HEK293 (cell line): ENCODE measurements at regions of chr20 and their contacts with region 1.

Region 1: DNA sequence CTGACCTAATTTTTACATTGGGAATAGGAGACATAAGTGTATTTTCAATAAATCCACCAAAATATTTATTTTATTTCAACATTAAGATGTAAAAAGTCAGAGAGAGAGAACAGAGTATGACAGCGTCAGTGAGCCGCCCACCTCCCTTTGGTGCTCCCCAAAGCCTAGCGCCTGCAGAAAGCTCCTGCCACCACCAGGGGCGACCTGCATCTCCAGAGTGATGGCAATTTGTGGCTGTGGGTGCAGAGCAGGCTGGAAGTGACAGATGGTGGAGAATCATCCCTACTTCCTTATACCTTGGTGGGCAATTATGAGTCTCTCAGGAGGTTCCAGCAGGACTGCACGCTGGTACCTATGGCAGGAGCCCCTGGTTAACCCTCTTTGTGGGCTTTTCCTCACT is 87.3 kb downstream of the PTPRT start:
- H3K4me3 ChIP-seq: no peak overlapping the region
- H3K27ac ChIP-seq: no peak overlapping the region
- H3K4me1 ChIP-seq: no peaks in the 10 kb centered on the region
- CTCF ChIP-seq: no peak

Region 2: GRCh38 chr20:43119720-43120119 is 17.3 kb after region 1 on chr20:
- CTCF ChIA-PET with region 1: interaction called, 10 read pairs
- POLR2A ChIA-PET with region 1: no interaction called
- H3K4me3 ChIP-seq: no peak overlapping the region
- H3K27ac ChIP-seq: no peak overlapping the region
- H3K4me1 ChIP-seq: no peaks in the 10 kb centered on the region
- CTCF ChIP-seq: no peak